ENCODE measurements at regions of chr15 and their contacts with region 1.

Region 1: GRCh38 chr15:40344631-40345120 is 3.9 kb upstream of the CCDC9B start:
- DNase-seq: no peak
- ATAC-seq: peak; percentile 55
- H3K4me3 ChIP-seq: no peak overlapping the region
- H3K27ac ChIP-seq: no peak overlapping the region
- H3K4me1 ChIP-seq: peaks cover 18 to 72% of the 10 kb centered on the region in 2 experiments
- H3K27me3 ChIP-seq: no peaks in the 10 kb centered on the region
- CTCF ChIP-seq: peak in 2 of 3 experiments; percentile 85 to 86; a peak in 4 of 6 replicates
- POLR2A ChIP-seq: no peak
- RAD21 ChIP-seq: no peak

Region 2: DNA sequence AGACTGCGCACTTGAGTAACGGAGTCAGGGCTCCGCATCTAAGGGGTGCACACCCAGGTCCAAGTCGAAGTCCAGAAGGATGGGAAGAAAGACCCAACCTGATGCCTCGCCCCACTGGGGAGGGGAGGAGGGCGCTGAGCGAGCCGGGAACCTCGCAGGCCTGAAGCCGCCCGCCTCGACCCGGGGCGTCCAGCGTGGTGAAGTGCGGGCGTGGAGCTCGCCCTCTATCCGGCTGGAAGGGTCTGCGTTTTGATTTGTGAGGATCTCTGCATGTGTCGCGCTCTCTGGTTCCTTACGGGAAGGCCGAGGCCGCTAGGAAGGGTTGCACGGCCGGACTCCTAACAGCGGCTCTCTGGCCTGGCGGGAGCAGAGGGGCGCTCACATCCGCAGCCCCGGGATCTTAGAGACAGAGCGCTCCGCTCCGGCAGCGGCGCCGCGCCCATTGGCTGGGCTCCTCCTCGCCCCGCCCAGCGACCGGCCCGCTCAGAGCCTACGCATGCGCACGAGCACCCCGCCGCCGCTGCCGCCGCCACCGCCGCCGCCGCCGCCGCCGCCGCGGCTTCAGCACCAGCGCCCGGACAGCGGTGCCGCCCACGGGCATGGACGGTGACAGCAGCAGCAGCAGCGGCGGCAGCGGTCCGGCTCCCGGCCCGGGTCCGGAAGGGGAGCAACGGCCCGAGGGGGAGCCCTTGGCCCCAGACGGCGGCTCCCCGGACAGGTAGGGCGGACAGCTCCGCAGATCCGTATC is 13.2 kb after region 1 on chr15 and contains the start of gene DISP2:
- CTCF ChIA-PET with region 1: interaction called, 22 read pairs
- POLR2A ChIA-PET with region 1: interaction called, 3 read pairs
- RAD21 ChIA-PET with region 1: interaction called in 1 of 2 experiments, 3 read pairs
- intact Hi-C with region 1: no loop called
- DNase-seq: peak; percentile 51
- ATAC-seq: peak; percentile 88
- H3K4me3 ChIP-seq: peak within 1 kb of the TSS; percentile 65 to 67
- H3K27ac ChIP-seq: peak within 1 kb of the TSS; percentile 8; the same call in 1 of the 2 replicates
- H3K4me1 ChIP-seq: peaks cover 17 to 30% of the 10 kb centered on the region in 2 experiments
- H3K27me3 ChIP-seq: no peaks in the 10 kb centered on the region
- CTCF ChIP-seq: no peak
- POLR2A ChIP-seq: no peak
- RAD21 ChIP-seq: no peak
- total RNA-seq, gene DISP2: 3.3 TPM

Region 3: GRCh38 chr15:40506964-40507571 is 162.4 kb after region 1 on chr15:
- CTCF ChIA-PET with region 1: no interaction called
- POLR2A ChIA-PET with region 1: no interaction called
- RAD21 ChIA-PET with region 1: no interaction called
- intact Hi-C with region 1: loop called (anchors 10 kb)
- DNase-seq: peak; percentile 57
- ATAC-seq: peak; percentile 94
- H3K4me3 ChIP-seq: peak overlapping the region; percentile 18 to 47
- H3K27ac ChIP-seq: no peak overlapping the region
- H3K4me1 ChIP-seq: peaks cover 8 to 23% of the 10 kb centered on the region in 2 experiments
- H3K27me3 ChIP-seq: no peaks in the 10 kb centered on the region
- CTCF ChIP-seq: peak; percentile 69 to 81 (median 73)
- POLR2A ChIP-seq: no peak
- RAD21 ChIP-seq: peak; percentile 75